Panc1 (cell line): ENCODE measurements at regions of chr11 and their contacts with region 1.

Region 1: GRCh38 chr11:65575568-65576231 is at the start of gene EHBP1L1:
- DNase-seq: no peak
- ATAC-seq: peak; percentile 26
- H3K4me3 ChIP-seq: peak within 1 kb of the TSS; percentile 82 to 93
- H3K27ac ChIP-seq: peak within 1 kb of the TSS; percentile 99
- H3K4me1 ChIP-seq: peaks cover 50% of the 10 kb centered on the region
- H3K27me3 ChIP-seq: no peaks in the 10 kb centered on the region
- CTCF ChIP-seq: no peak
- total RNA-seq, gene EHBP1L1: 108 TPM

Region 2: GRCh38 chr11:65615229-65615941 is 39.7 kb after region 1 on chr11 and contains the start of gene PCNX3:
- CTCF ChIA-PET with region 1: interaction called, 5 read pairs
- POLR2A ChIA-PET with region 1: interaction called, 5 read pairs
- in situ Hi-C with region 1: no loop called
- intact Hi-C with region 1: loop called (anchors 2 kb)
- DNase-seq: peak; percentile 100
- ATAC-seq: peak; percentile 88
- H3K4me3 ChIP-seq: peak within 1 kb of the TSS; percentile 88 to 97
- H3K27ac ChIP-seq: peak within 1 kb of the TSS; percentile 92
- H3K4me1 ChIP-seq: peaks cover 40% of the 10 kb centered on the region
- H3K27me3 ChIP-seq: no peaks in the 10 kb centered on the region
- CTCF ChIP-seq: no peak
- total RNA-seq, gene PCNX3: 74.5 TPM

Region 3: DNA sequence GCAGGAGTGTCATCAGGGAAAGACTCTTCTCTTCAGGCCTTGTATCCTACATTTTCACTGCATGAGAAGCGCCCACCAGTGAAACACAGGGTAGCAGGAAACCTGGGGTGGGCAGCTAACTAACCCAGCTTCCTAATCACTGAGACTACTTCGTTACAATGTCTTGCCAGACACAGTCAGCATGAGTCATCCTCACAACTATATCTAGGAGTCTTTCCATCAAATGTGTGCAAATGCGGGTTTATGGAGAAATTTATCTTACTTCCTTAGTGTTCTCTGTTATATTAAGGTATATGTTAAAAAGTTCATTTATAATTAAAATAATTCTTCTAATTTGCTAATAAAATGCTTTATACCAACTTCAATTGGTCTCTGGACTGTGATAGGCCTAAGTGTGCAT is 612.9 kb after region 1 on chr11:
- CTCF ChIA-PET with region 1: no interaction called
- POLR2A ChIA-PET with region 1: no interaction called
- in situ Hi-C with region 1: no loop called
- intact Hi-C with region 1: no loop called
- DNase-seq: no peak
- ATAC-seq: no peak
- H3K4me3 ChIP-seq: no peak overlapping the region
- H3K27ac ChIP-seq: no peak overlapping the region
- H3K4me1 ChIP-seq: no peaks in the 10 kb centered on the region
- H3K27me3 ChIP-seq: no peaks in the 10 kb centered on the region
- CTCF ChIP-seq: no peak